ENCODE measurements at regions of chr10 and their contacts with region 1.

Region 1: DNA sequence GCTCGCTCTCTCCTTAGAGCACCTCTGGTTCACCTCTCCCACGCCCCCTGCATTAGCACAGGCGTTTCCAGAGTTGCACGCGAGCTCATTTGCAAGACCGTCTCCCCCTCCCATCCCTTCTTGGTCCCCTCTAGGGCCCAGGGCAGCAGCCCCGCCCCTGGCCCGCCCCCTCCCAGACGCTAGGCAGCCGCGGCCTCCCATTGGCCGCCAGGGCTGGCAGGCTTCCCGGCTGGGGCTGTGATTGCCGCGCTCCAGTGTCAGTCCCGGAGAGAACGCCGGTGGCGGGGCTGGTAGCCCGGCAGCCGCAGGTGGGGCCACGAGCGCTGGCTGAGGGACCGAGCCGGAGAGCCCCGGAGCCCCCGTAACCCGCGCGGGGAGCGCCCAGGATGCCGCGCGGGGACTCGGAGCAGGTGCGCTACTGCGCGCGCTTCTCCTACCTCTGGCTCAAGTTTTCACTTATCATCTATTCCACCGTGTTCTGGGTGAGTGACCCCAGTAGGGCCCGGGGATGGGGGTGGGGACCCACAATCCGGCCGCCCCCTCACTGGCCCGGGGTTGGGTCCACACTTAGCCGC is at the start of gene TSPAN15:
- DNase-seq: peak; percentile 81
- ATAC-seq: peak; percentile 97
- H3K4me3 Mint-ChIP-seq: peak within 1 kb of the TSS; percentile 85
- H3K27ac Mint-ChIP-seq: no peak within 1 kb of the TSS
- H3K4me1 Mint-ChIP-seq: peaks cover 29% of the 10 kb centered on the region
- H3K27me3 Mint-ChIP-seq: peaks cover 26% of the 10 kb centered on the region
- total RNA-seq, gene TSPAN15: 3.8 to 4.7 TPM

Region 2: DNA sequence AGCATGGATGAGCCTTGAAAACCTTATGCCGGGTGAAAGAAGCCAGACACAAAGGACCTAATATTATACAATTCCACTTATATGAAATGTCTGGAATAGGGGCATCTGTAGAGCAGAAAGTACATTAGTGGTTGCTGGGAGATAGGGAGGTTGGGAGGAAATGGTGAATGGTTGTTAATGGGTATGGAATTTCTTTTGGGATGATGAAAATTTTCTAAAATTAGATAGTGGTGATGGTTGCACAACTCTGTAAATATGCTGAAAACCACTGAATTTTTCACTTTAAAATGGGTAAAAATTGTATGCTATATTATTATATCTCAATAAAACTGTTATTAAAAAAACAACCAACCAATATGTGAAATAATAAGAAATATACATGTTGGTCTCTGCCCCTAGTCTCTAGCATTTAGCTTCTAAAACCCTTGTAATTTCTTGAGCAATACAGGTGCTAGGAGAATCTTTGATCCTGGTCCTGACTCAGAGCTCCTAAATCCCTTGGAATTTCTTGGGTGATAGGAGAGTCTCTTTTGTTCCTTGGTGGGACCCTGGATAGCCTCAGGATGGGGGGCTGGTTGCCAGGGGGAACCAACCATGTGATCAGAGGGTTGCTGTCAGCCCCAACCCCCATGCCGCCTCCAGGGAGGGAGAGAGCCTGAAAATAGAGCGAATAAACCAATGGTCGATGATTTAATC is 98.6 kb before region 1 on chr10:
- CTCF ChIA-PET with region 1: no interaction called
- POLR2A ChIA-PET with region 1: no interaction called
- DNase-seq: no peak
- ATAC-seq: no peak
- H3K4me3 Mint-ChIP-seq: no peak overlapping the region
- H3K27ac Mint-ChIP-seq: no peak overlapping the region
- H3K4me1 Mint-ChIP-seq: peaks cover 50% of the 10 kb centered on the region
- H3K27me3 Mint-ChIP-seq: no peaks in the 10 kb centered on the region

Region 3: GRCh38 chr10:69464801-69465401 is 13.6 kb after region 1 on chr10:
- CTCF ChIA-PET with region 1: interaction called, 24 read pairs
- POLR2A ChIA-PET with region 1: interaction called, 4 read pairs
- DNase-seq: peak; percentile 30
- ATAC-seq: peak; percentile 68
- H3K4me3 Mint-ChIP-seq: peak overlapping the region; percentile 42
- H3K27ac Mint-ChIP-seq: peak overlapping the region; percentile 94
- H3K4me1 Mint-ChIP-seq: peaks cover 70% of the 10 kb centered on the region
- H3K27me3 Mint-ChIP-seq: peaks cover 3% of the 10 kb centered on the region

Measured in activated CD8-positive, alpha-beta T cell treated with anti-CD3 and anti-CD28 coated beads, Interleukin-2, amount 10 ng/mL, durations not matched to agents 7 days and 5 days (primary cell).